ENCODE measurements at regions of chr3 and their contacts with region 1.

Region 1: GRCh38 chr3:129558772-129559564 is 16.0 kb downstream of the H1-8 start:
- DNase-seq: no peak
- H3K4me3 ChIP-seq: no peak overlapping the region
- H3K27ac ChIP-seq: peak overlapping the region; percentile 79 to 87
- H3K4me1 ChIP-seq: peaks cover 67% of the 10 kb centered on the region
- H3K27me3 ChIP-seq: no peaks in the 10 kb centered on the region
- CTCF ChIP-seq: no peak
- POLR2A ChIP-seq: no peak

Region 2: GRCh38 chr3:129606636-129607390 is 47.8 kb after region 1 on chr3 and contains the start of gene PLXND1:
- intact Hi-C with region 1: loop called (anchors 10 kb)
- DNase-seq: peak; percentile 74
- H3K4me3 ChIP-seq: peak within 1 kb of the TSS; percentile 68 to 72
- H3K27ac ChIP-seq: peak within 1 kb of the TSS; percentile 91 to 93
- H3K4me1 ChIP-seq: peaks cover 36% of the 10 kb centered on the region
- H3K27me3 ChIP-seq: no peaks in the 10 kb centered on the region
- CTCF ChIP-seq: no peak
- POLR2A ChIP-seq: no peak
- total RNA-seq, gene PLXND1: 50.2 to 87.8 TPM

Region 3: DNA sequence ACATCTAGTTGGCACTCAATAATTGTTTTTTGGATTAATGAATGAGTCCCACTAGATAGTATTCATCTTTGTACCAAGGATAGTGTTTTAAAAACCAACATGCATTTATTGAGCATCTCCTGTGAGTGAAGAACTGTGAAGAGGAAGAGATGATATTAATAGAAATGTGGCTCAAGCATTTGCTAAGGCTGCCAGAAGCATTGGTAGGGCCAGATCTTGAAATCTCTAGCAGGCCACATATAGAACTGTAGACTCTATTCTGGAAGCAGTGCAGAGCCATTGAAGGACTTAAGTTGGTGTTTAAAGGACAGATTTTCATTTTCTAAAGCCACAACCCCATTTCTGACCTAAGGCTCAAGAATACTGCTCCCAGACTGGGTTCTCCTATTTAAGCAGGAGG is 1566.7 kb after region 1 on chr3:
- intact Hi-C with region 1: no loop called
- DNase-seq: no peak
- H3K4me3 ChIP-seq: no peak overlapping the region
- H3K27ac ChIP-seq: no peak overlapping the region
- H3K4me1 ChIP-seq: no peaks in the 10 kb centered on the region
- H3K27me3 ChIP-seq: no peaks in the 10 kb centered on the region
- CTCF ChIP-seq: no peak
- POLR2A ChIP-seq: no peak

Measured in testis (tissue), 5 donors.